PC-3 (cell line): ENCODE measurements at regions of chr2 and their contacts with region 1.

Region 1: GRCh38 chr2:222959336-222959735 is 92.7 kb upstream of the KCNE4 start:
- DNase-seq: peak; percentile 96
- ATAC-seq: peak; percentile 97
- H3K4me3 ChIP-seq: no peak overlapping the region
- H3K27ac ChIP-seq: 0 out of 2 replicates have a peak overlapping the region, but pooled peaks have one; percentile 4
- H3K4me1 ChIP-seq: peaks cover 15% of the 10 kb centered on the region
- H3K27me3 ChIP-seq: no peaks in the 10 kb centered on the region
- CTCF ChIP-seq: peak; percentile 64

Region 2: GRCh38 chr2:222690564-222691200 is 268.7 kb before region 1 on chr2:
- CTCF ChIA-PET with region 1: no interaction called
- POLR2A ChIA-PET with region 1: no interaction called
- intact Hi-C with region 1: loop called (anchors 5 kb)
- DNase-seq: peak; percentile 86
- ATAC-seq: peak; percentile 87
- H3K4me3 ChIP-seq: peak overlapping the region; percentile 54; the same call in 1 of the 2 replicates
- H3K27ac ChIP-seq: no peak overlapping the region
- H3K4me1 ChIP-seq: no peaks in the 10 kb centered on the region; the same call in 1 of the 2 replicates
- H3K27me3 ChIP-seq: no peaks in the 10 kb centered on the region
- CTCF ChIP-seq: peak; percentile 100

Region 3: GRCh38 chr2:222915092-222915957 is 44.0 kb before region 1 on chr2:
- CTCF ChIA-PET with region 1: no interaction called
- POLR2A ChIA-PET with region 1: no interaction called
- intact Hi-C with region 1: loop called (anchors 1 kb)
- DNase-seq: peak; percentile 53
- ATAC-seq: peak; percentile 19; the same call in 1 of the 2 replicates
- H3K4me3 ChIP-seq: no peak overlapping the region
- H3K27ac ChIP-seq: no peak overlapping the region
- H3K4me1 ChIP-seq: peaks cover 22% of the 10 kb centered on the region
- H3K27me3 ChIP-seq: no peaks in the 10 kb centered on the region
- CTCF ChIP-seq: peak; percentile 79

Region 4: GRCh38 chr2:223108351-223109050 is 149.2 kb after region 1 on chr2:
- CTCF ChIA-PET with region 1: no interaction called
- POLR2A ChIA-PET with region 1: no interaction called
- intact Hi-C with region 1: no loop called
- DNase-seq: no peak
- ATAC-seq: no peak
- H3K4me3 ChIP-seq: no peak overlapping the region
- H3K27ac ChIP-seq: no peak overlapping the region
- H3K4me1 ChIP-seq: no peaks in the 10 kb centered on the region
- H3K27me3 ChIP-seq: peaks cover 39% of the 10 kb centered on the region; the same call in 1 of the 2 replicates
- CTCF ChIP-seq: no peak